ENCODE measurements at regions of chr1 and their contacts with region 1.

Region 1: DNA sequence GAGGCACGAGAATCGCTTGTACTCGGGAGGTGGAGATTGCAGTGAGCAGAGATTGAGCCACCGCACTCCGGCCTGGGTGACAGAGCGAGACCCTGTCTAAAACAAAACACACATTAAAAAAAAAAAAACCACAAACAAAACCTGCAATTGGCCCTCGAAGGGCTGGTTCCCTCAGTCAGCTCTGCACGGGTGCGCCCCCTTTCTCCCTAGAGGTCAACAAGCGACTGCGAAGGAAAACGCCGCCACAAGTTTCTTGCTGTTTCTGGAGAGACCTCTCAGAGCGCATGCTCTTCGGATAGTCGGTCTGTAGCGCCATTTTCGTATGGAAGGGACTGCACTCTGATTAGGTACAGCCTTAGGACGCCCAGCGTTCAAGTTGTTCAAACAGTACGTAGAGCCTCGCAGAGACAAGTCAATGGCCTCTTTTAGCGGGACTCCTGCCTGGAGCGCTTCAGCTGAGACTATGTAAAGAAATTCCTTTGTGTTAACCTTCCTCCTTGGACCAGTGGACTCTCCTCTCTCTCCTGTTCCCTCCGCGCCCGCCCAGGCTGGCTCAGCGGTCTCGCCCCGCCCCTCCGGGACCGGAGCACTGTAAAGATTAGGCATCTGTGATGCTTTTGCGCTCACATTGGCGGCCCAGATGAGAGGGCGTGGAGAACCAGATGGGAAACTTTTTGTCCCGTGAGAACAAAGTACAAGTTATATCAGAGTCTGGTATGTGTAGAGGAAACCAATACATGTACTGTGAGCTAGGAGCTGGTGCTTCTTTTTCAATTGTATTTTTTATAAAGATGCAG is 1.0 kb upstream of the CDC14A start:
- DNase-seq: peak; percentile 88 to 95 (median 89)
- H3K4me3 ChIP-seq: peak overlapping the region; percentile 89 to 94
- H3K4me3 Mint-ChIP-seq: peak overlapping the region; percentile 90 to 100 (median 99)
- H3K27ac ChIP-seq: peak overlapping the region; percentile 85
- H3K27ac Mint-ChIP-seq: peak overlapping the region; percentile 95 to 100 (median 99)
- H3K4me1 ChIP-seq: peaks cover 26% of the 10 kb centered on the region
- H3K4me1 Mint-ChIP-seq: peaks cover 21 to 46% (median 25%) of the 10 kb centered on the region in 4 donors
- H3K27me3 ChIP-seq: no peaks in the 10 kb centered on the region
- H3K27me3 Mint-ChIP-seq: peaks cover 0 to 2% of the 10 kb centered on the region in 2 donors

Region 2: DNA sequence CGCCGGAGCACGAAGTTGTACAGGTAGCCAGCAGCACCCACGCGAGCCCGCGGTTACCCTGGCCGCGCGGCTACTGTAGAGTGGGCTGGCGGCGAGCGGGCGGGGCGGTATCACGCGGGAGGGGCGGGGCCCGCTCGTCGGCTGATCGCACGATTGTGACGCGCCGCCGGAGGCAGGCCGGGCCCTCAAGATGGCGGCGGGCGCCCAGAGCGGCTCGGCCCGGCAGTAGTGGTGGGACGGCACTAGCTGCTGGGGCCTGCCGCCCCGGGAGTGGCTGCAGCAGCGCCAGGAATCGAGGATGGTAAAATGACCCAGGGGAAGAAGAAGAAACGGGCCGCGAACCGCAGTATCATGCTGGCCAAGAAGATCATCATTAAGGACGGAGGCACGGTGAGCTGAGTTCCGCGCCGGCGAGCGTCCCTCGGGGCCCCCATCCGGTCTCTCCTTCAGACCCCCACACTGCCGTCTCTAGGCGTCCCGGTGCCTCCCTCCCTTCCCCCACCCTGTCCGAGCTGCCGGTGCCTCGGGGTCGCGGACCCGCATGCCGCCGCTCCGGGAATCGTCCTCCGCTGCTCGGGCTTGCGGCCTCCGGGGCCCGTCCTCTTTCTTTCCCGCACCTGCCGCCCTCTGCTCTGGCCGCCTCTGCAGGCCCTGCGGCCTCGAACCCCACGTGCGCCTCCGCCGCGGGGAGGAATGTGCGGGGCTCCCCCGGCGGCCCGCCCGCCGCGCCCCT is 313.2 kb before region 1 on chr1:
- CTCF ChIA-PET with region 1: no interaction called
- POLR2A ChIA-PET with region 1: interaction called, 5 read pairs
- intact Hi-C with region 1: loop called (anchors 2 kb)
- DNase-seq: peak; percentile 88 to 90 (median 89)
- H3K4me3 ChIP-seq: peak overlapping the region; percentile 43 to 75
- H3K4me3 Mint-ChIP-seq: peak overlapping the region; percentile 91 to 100 (median 98)
- H3K27ac ChIP-seq: peak overlapping the region; percentile 99
- H3K27ac Mint-ChIP-seq: peak overlapping the region; percentile 98 to 100 (median 99)
- H3K4me1 ChIP-seq: peaks cover 50% of the 10 kb centered on the region
- H3K4me1 Mint-ChIP-seq: peaks cover 33 to 66% (median 46%) of the 10 kb centered on the region in 4 donors
- H3K27me3 ChIP-seq: no peaks in the 10 kb centered on the region
- H3K27me3 Mint-ChIP-seq: no peaks in the 10 kb centered on the region

Region 3: DNA sequence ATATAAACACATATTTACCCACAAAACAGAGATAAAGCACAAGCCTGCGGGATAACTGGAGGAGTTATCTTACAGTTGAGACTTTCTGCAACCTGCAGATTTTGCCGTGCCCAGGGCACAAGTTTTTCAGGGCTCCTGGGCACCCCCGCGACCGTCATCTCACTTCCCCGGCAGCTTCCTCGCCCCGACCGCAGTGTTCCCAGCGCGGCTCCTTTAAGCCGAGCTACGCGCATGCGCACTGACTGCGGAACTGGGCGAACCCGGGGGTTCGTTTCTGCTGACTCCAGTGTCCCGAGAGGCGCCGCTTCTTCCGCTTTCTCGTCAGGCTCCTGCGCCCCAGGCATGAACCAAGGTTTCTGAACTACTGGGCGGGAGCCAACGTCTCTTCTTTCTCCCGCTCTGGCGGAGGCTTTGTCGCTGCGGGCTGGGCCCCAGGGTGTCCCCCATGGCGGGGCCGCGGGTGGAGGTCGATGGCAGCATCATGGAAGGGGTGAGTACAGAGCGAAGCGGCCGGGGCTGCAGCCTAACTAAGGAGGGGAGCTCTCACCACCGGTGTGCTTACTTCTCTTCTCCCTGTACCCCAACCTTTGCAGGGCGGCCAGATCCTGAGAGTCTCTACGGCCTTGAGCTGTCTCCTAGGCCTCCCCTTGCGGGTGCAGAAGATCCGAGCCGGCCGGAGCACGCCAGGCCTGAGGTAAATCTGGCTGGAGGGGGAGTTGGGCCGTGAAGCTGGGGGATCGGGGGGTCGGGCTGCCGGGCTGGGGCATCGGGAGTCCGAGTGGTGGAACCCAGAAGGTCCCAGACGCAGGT is 85.2 kb before region 1 on chr1 and contains the start of gene RTCA:
- CTCF ChIA-PET with region 1: interaction called, 17 read pairs
- POLR2A ChIA-PET with region 1: interaction called, 47 read pairs
- intact Hi-C with region 1: loop called (anchors 1 kb)
- DNase-seq: peak; percentile 93 to 97 (median 94)
- H3K4me3 ChIP-seq: peak within 1 kb of the TSS; percentile 77
- H3K4me3 Mint-ChIP-seq: peak within 1 kb of the TSS; percentile 99 to 100 (median 100)
- H3K27ac ChIP-seq: peak within 1 kb of the TSS; percentile 78
- H3K27ac Mint-ChIP-seq: peak within 1 kb of the TSS; percentile 96 to 99 (median 98)
- H3K4me1 ChIP-seq: peaks cover 44% of the 10 kb centered on the region
- H3K4me1 Mint-ChIP-seq: peaks cover 19 to 58% (median 39%) of the 10 kb centered on the region in 4 donors
- H3K27me3 ChIP-seq: no peaks in the 10 kb centered on the region
- H3K27me3 Mint-ChIP-seq: no peaks in the 10 kb centered on the region
- total RNA-seq, gene RTCA: 39.7 to 41.4 TPM

Region 4: DNA sequence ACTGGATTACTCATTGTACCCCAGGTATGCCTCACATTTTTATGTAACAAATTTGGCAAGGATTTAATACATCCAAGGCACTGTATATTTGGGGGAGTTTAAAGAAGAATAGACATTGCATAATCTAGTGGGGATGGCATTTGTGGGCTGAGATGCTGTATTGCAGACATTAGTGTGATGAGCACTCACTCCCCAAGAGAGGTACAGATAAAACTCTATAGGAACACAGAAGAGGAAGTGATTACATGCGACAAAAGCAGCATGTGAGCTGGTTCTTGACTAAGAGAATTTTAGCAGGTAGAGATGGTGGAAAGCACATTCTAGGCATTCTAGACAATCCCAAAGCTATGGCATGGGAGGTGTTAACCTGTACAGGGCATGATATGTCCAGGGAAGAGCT is 23.2 kb before region 1 on chr1:
- CTCF ChIA-PET with region 1: no interaction called
- POLR2A ChIA-PET with region 1: no interaction called
- intact Hi-C with region 1: no loop called
- DNase-seq: no peak
- H3K4me3 ChIP-seq: no peak overlapping the region
- H3K4me3 Mint-ChIP-seq: no peak overlapping the region
- H3K27ac ChIP-seq: no peak overlapping the region
- H3K27ac Mint-ChIP-seq: no peak overlapping the region
- H3K4me1 ChIP-seq: no peaks in the 10 kb centered on the region
- H3K4me1 Mint-ChIP-seq: no peaks in the 10 kb centered on the region
- H3K27me3 ChIP-seq: no peaks in the 10 kb centered on the region
- H3K27me3 Mint-ChIP-seq: no peaks in the 10 kb centered on the region

Region 5: GRCh38 chr1:100387209-100387608 is 35.9 kb after region 1 on chr1:
- CTCF ChIA-PET with region 1: interaction called, 14 read pairs
- POLR2A ChIA-PET with region 1: interaction called, 283 read pairs
- intact Hi-C with region 1: loop called (anchors 2 kb)
- DNase-seq: no peak
- H3K4me3 ChIP-seq: no peak overlapping the region
- H3K4me3 Mint-ChIP-seq: peak overlapping the region; percentile 67 to 80 (median 73)
- H3K27ac ChIP-seq: peak overlapping the region; percentile 65
- H3K27ac Mint-ChIP-seq: peak overlapping the region; percentile 89 to 95 (median 93)
- H3K4me1 ChIP-seq: peaks cover 98% of the 10 kb centered on the region
- H3K4me1 Mint-ChIP-seq: peaks cover 69 to 98% (median 87%) of the 10 kb centered on the region in 4 donors
- H3K27me3 ChIP-seq: no peaks in the 10 kb centered on the region
- H3K27me3 Mint-ChIP-seq: no peaks in the 10 kb centered on the region

Region 6: GRCh38 chr1:100423832-100424337 is 72.6 kb after region 1 on chr1:
- CTCF ChIA-PET with region 1: interaction called, 32 read pairs
- POLR2A ChIA-PET with region 1: interaction called, 175 read pairs
- intact Hi-C with region 1: loop called (anchors 2 kb)
- DNase-seq: peak; percentile 54 to 65 (median 61)
- H3K4me3 ChIP-seq: peak overlapping the region; percentile 45 to 66
- H3K4me3 Mint-ChIP-seq: peak overlapping the region; percentile 89 to 100 (median 94)
- H3K27ac ChIP-seq: peak overlapping the region; percentile 68
- H3K27ac Mint-ChIP-seq: peak overlapping the region; percentile 90 to 99 (median 97)
- H3K4me1 ChIP-seq: peaks cover 80% of the 10 kb centered on the region
- H3K4me1 Mint-ChIP-seq: peaks cover 52 to 84% (median 63%) of the 10 kb centered on the region in 4 donors
- H3K27me3 ChIP-seq: no peaks in the 10 kb centered on the region
- H3K27me3 Mint-ChIP-seq: no peaks in the 10 kb centered on the region

Region 7: GRCh38 chr1:100452641-100453040 is 101.3 kb after region 1 on chr1:
- CTCF ChIA-PET with region 1: interaction called, 57 read pairs
- POLR2A ChIA-PET with region 1: interaction called, 233 read pairs
- intact Hi-C with region 1: no loop called
- DNase-seq: peak in 4 of 5 donors; percentile 73 to 86 (median 80)
- H3K4me3 ChIP-seq: no peak overlapping the region
- H3K4me3 Mint-ChIP-seq: peak overlapping the region in 7 of 8 donors; percentile 32 to 83 (median 58)
- H3K27ac ChIP-seq: peak overlapping the region; percentile 78
- H3K27ac Mint-ChIP-seq: peak overlapping the region; percentile 89 to 100 (median 98)
- H3K4me1 ChIP-seq: peaks cover 100% of the 10 kb centered on the region
- H3K4me1 Mint-ChIP-seq: peaks cover 58 to 93% (median 76%) of the 10 kb centered on the region in 4 donors
- H3K27me3 ChIP-seq: no peaks in the 10 kb centered on the region
- H3K27me3 Mint-ChIP-seq: no peaks in the 10 kb centered on the region

Measured in CD4-positive, alpha-beta memory T cell (primary cell).